GM18951 (cell line): ENCODE measurements at regions of chr16 and their contacts with region 1.

Region 1: DNA sequence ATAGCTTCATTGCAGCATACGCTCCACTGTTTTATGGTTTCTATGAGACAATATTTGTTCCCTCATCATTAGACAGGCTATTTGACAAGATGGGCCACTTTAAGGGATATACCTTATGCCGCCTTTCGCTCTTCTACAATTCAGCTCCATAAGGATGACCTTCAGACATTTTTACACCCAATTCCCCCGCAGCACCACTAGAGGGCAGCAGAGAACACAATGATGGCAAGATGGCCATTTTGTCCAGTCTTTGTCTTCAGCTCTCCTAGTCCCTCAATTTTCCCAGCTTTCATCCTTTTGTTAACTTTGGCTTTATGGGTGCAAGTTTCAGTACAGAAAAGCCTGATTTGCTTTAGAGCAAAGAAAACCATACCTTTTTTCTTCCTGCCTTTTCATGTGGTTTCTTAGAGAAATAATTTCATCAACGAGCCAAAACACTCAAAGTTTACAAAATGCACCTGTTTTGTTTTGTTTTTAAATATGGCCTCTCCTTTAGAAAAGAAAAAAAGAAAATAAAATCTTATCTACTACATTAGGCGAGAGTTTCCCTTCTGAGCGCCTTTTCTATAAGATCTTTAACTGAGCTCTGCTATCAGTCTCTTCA is 355.3 kb downstream of the TOX3 start:
- POLR2A ChIP-seq: no peak

Region 2: DNA sequence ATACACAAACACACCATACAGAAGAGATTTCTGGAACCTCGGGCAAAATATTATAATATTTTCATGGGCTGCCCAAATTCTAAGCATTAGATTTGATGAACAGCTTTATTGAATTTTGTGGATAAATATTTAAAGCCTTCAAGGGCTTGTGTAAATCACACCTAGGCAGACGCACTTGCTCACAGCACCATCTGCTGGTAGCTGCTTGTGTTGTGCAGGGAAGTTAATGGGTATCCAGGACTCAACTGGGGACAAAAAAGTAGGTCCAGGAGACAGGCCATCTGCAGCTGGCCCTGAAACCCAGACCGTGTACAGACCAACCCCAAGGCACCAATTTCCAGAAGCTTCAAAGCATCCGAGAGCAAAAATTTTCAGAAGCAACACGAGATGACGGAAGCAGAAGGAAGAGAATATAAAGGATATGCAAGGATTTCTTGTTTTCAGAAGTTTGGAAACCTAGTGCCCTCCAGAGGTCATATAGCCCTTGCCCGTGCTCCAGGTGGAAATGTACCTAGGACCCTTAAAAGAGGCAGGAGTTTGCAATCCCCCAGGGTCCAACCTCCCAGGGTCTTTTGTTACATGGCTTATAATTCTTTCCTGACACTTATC is 721.0 kb after region 1 on chr16:
- in situ Hi-C with region 1: loop called (anchors 25 kb)
- POLR2A ChIP-seq: no peak